ENCODE measurements at regions of chr7 and their contacts with region 1.

Region 1: GRCh38 chr7:5694912-5695726 is 86.3 kb downstream of the RNF216 start:
- DNase-seq: peak in 1 of 3 donors; percentile 52
- H3K4me3 ChIP-seq: peak overlapping the region in 1 of 3 experiments; percentile 45
- H3K4me3 Mint-ChIP-seq: peak overlapping the region; percentile 64 to 66
- H3K27ac ChIP-seq: peak overlapping the region; percentile 79 to 99
- H3K27ac Mint-ChIP-seq: peak overlapping the region; percentile 97 to 100 (median 99)
- H3K4me1 ChIP-seq: peaks cover 77 to 83% of the 10 kb centered on the region in 2 donors
- H3K4me1 Mint-ChIP-seq: peaks cover 88% of the 10 kb centered on the region
- H3K27me3 ChIP-seq: no peaks in the 10 kb centered on the region
- H3K27me3 Mint-ChIP-seq: peaks cover 0 to 2% (median 0%) of the 10 kb centered on the region in 3 donors
- CTCF ChIP-seq: no peak

Region 2: DNA sequence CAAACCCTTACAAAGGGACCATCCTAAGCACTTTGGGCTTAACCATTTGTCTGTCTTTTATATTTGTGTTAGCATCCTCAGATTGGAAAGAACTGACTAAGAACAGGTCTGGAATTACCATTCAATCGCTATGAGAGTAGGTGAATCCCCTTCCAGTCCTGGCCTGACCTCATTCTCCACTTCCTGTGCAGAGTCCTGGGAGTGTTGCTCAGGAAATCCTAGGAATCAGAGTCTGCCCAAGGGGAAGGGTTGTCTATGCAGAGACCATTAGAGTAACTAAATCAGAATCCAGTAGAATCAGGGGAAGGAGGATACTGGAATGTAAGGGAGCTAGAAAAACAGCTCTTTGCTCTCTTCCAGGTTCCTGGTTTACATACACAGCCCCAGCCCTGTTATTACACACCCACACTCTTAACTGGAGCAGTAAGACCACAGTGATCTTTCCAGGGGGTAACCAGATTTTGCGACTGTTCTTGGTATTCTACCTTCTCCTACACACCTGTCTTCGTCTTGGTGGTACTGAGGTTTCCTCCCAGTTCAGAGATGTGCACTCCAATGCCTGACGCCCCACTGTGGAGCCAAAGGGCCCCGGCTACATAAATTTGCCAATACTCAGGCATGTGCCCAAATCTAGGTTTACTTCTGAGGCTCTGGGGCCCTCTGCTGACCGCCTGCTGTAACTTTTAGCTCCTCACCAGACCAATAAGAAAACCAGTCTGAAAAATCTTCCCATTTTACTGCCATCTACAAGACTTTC is 17.4 kb before region 1 on chr7:
- intact Hi-C with region 1: loop called in 1 of 2 experiments (anchors 1 kb)
- DNase-seq: peak; percentile 71 to 77 (median 77)
- H3K4me3 ChIP-seq: peak overlapping the region in 1 of 3 experiments; percentile 18
- H3K4me3 Mint-ChIP-seq: no peak overlapping the region
- H3K27ac ChIP-seq: peak overlapping the region; percentile 88 to 93
- H3K27ac Mint-ChIP-seq: peak overlapping the region; percentile 98 to 99 (median 99)
- H3K4me1 ChIP-seq: peaks cover 64 to 66% of the 10 kb centered on the region in 2 donors
- H3K4me1 Mint-ChIP-seq: peaks cover 66% of the 10 kb centered on the region
- H3K27me3 ChIP-seq: no peaks in the 10 kb centered on the region
- H3K27me3 Mint-ChIP-seq: peaks cover 0 to 3% (median 0%) of the 10 kb centered on the region in 3 donors
- CTCF ChIP-seq: peak; percentile 84

Measured in CD14-positive monocyte (primary cell).